ENCODE measurements at regions of chr5 and their contacts with region 1.

Region 1: GRCh38 chr5:174418928-174419796 is 305.2 kb upstream of the MSX2 start:
- DNase-seq: peak; percentile 93 to 95
- H3K4me3 ChIP-seq: peak overlapping the region; percentile 18 to 57 (median 47); a peak in 7 of 8 replicates
- H3K27ac ChIP-seq: no peak overlapping the region
- H3K4me1 ChIP-seq: no peaks in the 10 kb centered on the region
- H3K27me3 ChIP-seq: peaks cover 0 to 11% (median 5%) of the 10 kb centered on the region in 4 experiments; a peak in 3 of 7 replicates
- CTCF ChIP-seq: peak; percentile 86 to 93 (median 91)
- EP300 ChIP-seq: no peak
- POLR2A ChIP-seq: no peak
- RAD21 ChIP-seq: peak; percentile 99

Region 2: DNA sequence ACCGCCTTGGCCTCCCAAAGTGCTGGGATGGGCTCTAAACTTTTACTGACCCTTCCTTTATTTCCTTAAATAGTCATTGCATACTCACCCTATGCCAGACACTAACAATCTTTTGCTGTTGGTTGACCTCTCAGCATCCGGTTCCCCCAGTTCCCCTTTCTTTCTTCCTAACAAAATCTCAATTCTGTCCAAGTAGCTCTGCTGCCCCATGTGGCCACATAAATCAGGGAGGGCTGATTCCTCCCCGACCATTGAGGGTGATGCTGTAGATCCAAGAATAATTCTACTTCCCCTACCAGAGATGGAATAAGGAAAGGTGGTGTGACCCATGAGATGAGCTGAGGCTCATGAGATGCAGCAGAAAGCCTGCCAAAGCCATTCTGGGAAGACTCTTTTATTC is 10.1 kb before region 1 on chr5:
- CTCF ChIA-PET with region 1: interaction called, 26 read pairs
- POLR2A ChIA-PET with region 1: no interaction called
- DNase-seq: no peak
- H3K4me3 ChIP-seq: no peak overlapping the region
- H3K27ac ChIP-seq: no peak overlapping the region
- H3K4me1 ChIP-seq: no peaks in the 10 kb centered on the region
- H3K27me3 ChIP-seq: no peaks in the 10 kb centered on the region
- CTCF ChIP-seq: peak; percentile 30 to 56 (median 50); a peak in 3 of 4 replicates
- EP300 ChIP-seq: no peak
- POLR2A ChIP-seq: no peak
- RAD21 ChIP-seq: peak; percentile 38 to 51

Region 3: GRCh38 chr5:174464504-174465165 is 45.5 kb after region 1 on chr5:
- CTCF ChIA-PET with region 1: interaction called, 19 read pairs
- POLR2A ChIA-PET with region 1: no interaction called
- DNase-seq: no peak
- H3K4me3 ChIP-seq: no peak overlapping the region
- H3K27ac ChIP-seq: no peak overlapping the region
- H3K4me1 ChIP-seq: peaks cover 0 to 6% (median 2%) of the 10 kb centered on the region in 4 experiments; a peak in 5 of 7 replicates
- H3K27me3 ChIP-seq: no peaks in the 10 kb centered on the region
- CTCF ChIP-seq: peak in 1 of 3 experiments; percentile 11; a peak in 1 of 4 replicates
- EP300 ChIP-seq: no peak
- POLR2A ChIP-seq: no peak
- RAD21 ChIP-seq: 0 out of 4 replicates have a peak, but pooled peaks of 1 of the 2 experiments have one; percentile 11

Region 4: GRCh38 chr5:174571662-174572397 is 152.7 kb after region 1 on chr5:
- CTCF ChIA-PET with region 1: interaction called, 11 read pairs
- POLR2A ChIA-PET with region 1: no interaction called
- DNase-seq: no peak
- H3K4me3 ChIP-seq: no peak overlapping the region
- H3K27ac ChIP-seq: no peak overlapping the region
- H3K4me1 ChIP-seq: no peaks in the 10 kb centered on the region; a peak in 1 of 7 replicates
- H3K27me3 ChIP-seq: no peaks in the 10 kb centered on the region
- CTCF ChIP-seq: peak in 2 of 3 experiments; percentile 12 to 17; a peak in 2 of 4 replicates
- EP300 ChIP-seq: no peak
- POLR2A ChIP-seq: no peak
- RAD21 ChIP-seq: peak; percentile 15 to 38; a peak in 3 of 4 replicates

Region 5: GRCh38 chr5:174729075-174729680 is 310.0 kb after region 1 on chr5:
- CTCF ChIA-PET with region 1: interaction called, 37 read pairs
- POLR2A ChIA-PET with region 1: no interaction called
- DNase-seq: peak in 1 of 2 experiments; percentile 68
- H3K4me3 ChIP-seq: peak overlapping the region in 2 of 4 experiments; percentile 14 to 44; a peak in 3 of 8 replicates
- H3K27ac ChIP-seq: no peak overlapping the region
- H3K4me1 ChIP-seq: peaks cover 8 to 39% (median 14%) of the 10 kb centered on the region in 4 experiments
- H3K27me3 ChIP-seq: peaks cover 85 to 98% (median 94%) of the 10 kb centered on the region in 4 experiments
- CTCF ChIP-seq: no peak
- EP300 ChIP-seq: no peak
- POLR2A ChIP-seq: no peak
- RAD21 ChIP-seq: no peak

Region 6: GRCh38 chr5:174751154-174752000 is 332.2 kb after region 1 on chr5:
- CTCF ChIA-PET with region 1: interaction called, 18 read pairs
- POLR2A ChIA-PET with region 1: no interaction called
- DNase-seq: peak in 1 of 2 experiments; percentile 72
- H3K4me3 ChIP-seq: peak overlapping the region; percentile 42 to 77 (median 68)
- H3K27ac ChIP-seq: no peak overlapping the region
- H3K4me1 ChIP-seq: no peaks in the 10 kb centered on the region
- H3K27me3 ChIP-seq: peaks cover 15 to 54% (median 42%) of the 10 kb centered on the region in 4 experiments
- CTCF ChIP-seq: no peak
- EP300 ChIP-seq: no peak
- POLR2A ChIP-seq: no peak
- RAD21 ChIP-seq: no peak

Measured in H1 (cell line).